Aorta (tissue), 5 donors: ENCODE measurements at regions of chr1 and their contacts with region 1.

Region 1: DNA sequence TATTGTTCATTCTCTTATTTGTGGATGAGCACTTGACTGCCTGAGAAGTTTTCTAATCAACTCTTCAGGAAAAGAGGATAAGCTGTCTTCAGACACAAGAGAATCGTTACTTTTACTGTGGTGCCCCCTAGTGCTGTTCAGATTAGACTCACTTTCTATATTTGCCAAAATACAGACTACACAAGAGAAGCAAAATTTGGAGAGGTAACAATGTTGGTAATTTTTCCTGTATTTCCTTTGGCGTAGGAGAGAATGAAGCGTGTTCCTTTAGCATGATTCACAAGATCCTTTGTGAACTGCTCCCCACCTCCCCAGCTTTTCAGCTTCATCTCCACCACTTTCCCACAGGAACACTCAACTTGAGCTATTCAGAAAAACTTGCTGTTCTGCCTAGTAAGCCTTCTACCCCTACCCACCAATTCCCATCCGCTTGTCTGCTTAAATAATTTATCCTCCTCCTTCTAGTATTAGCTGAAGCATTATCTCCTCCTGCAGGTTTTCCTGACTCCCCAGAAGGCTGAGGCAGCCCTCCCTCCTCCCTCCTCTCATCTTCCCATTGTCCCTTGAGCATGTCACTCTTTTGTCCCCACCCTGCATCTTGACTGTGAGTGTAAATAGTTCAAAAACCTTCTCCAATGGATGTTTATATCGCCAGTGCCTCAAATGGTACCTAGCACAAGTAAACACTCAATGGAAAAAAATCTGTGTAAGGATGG is 4.5 kb downstream of the TNFSF4 start:
- DNase-seq: no peak
- ATAC-seq: peak; percentile 73
- H3K4me3 ChIP-seq: no peak overlapping the region
- H3K27ac ChIP-seq: no peak overlapping the region
- H3K4me1 ChIP-seq: peaks cover 2 to 4% of the 10 kb centered on the region in 2 donors
- H3K27me3 ChIP-seq: no peaks in the 10 kb centered on the region

Region 2: DNA sequence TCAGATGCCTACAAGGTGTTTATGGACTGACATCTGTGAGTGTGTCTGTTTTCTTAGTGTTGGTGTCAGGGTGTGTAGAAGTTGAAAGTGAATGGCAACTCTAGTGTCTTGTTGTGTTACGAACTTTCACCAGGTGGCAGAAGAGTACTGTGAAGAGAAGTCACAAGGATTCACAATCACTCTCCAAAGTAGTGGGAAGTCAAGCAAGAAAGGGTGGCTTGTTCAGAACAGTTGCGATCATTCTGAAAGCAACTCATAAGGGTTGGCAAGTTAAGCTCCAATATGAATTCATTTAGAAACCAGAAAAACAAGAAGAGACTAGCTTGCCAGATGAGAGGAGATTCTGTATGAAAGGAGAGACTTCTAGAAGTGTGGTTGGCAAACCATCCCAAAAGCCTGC is 457.6 kb before region 1 on chr1:
- intact Hi-C with region 1: loop called (anchors 2 to 5 kb)
- DNase-seq: no peak
- ATAC-seq: peak; percentile 60
- H3K4me3 ChIP-seq: no peak overlapping the region
- H3K27ac ChIP-seq: no peak overlapping the region
- H3K4me1 ChIP-seq: no peaks in the 10 kb centered on the region
- H3K27me3 ChIP-seq: no peaks in the 10 kb centered on the region

Region 3: DNA sequence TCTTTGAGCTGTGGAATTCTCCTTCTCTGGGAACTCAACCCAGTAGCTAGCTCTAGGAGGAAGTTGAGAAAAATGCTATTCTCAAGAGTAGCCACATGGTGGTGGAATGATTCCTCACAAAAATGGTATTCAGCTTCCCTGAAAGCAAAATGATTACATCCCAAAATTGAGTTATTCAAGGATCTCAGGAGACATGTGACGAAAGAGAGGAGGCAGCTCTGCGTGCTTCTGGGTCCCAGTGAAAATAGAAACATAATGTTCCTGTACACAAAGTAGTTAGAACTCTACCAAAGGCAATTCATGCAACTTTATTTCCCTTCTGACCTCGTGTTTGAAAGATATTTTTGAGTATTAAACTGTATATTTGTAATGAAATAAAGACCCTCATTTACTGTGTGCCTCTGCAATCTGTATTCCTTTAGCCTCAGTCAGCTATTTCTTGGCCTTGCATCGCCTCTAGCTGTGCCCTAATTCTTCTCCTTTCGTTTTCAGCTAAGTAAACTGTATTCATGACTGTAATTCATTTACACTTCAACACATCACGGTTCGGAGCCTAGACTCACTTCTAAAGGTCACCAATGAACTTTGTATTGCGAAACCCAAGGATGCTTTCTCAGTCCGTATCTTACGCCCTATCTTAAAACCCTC is 376.4 kb before region 1 on chr1:
- intact Hi-C with region 1: loop called (anchors 2 kb)
- DNase-seq: no peak
- ATAC-seq: peak; percentile 92
- H3K4me3 ChIP-seq: peak overlapping the region in 1 of 2 donors; percentile 3
- H3K27ac ChIP-seq: no peak overlapping the region
- H3K4me1 ChIP-seq: peaks cover 0 to 2% of the 10 kb centered on the region in 2 donors
- H3K27me3 ChIP-seq: no peaks in the 10 kb centered on the region